ENCODE measurements at regions of chr20 and their contacts with region 1.

Region 1: GRCh38 chr20:37421988-37422387 is 76.0 kb downstream of the SRC start:
- DNase-seq: peak in 8 of 10 donors; percentile 46 to 93 (median 63)

Region 2: DNA sequence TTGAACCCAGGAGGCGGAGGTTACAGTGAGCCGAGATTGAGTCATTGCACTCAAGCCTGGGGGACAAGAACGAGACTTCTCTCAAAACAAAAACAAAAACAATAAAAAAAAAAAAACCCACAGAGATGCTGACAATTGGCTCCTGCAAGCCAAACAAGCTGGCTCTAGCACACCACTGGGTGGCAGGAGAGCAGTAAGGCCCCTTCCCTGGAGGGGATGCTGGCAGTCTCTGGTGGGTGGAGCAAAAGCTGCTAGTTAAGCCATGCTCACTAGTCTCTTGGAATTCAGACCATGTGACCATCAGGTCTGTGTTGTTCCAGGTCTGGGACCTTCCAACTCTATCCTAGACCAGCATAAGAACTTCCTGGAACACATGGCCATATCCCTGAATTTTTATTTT is 629.6 kb before region 1 on chr20:
- intact Hi-C with region 1: no loop called
- DNase-seq: peak in 7 of 10 donors; percentile 28 to 92 (median 53)

Region 3: DNA sequence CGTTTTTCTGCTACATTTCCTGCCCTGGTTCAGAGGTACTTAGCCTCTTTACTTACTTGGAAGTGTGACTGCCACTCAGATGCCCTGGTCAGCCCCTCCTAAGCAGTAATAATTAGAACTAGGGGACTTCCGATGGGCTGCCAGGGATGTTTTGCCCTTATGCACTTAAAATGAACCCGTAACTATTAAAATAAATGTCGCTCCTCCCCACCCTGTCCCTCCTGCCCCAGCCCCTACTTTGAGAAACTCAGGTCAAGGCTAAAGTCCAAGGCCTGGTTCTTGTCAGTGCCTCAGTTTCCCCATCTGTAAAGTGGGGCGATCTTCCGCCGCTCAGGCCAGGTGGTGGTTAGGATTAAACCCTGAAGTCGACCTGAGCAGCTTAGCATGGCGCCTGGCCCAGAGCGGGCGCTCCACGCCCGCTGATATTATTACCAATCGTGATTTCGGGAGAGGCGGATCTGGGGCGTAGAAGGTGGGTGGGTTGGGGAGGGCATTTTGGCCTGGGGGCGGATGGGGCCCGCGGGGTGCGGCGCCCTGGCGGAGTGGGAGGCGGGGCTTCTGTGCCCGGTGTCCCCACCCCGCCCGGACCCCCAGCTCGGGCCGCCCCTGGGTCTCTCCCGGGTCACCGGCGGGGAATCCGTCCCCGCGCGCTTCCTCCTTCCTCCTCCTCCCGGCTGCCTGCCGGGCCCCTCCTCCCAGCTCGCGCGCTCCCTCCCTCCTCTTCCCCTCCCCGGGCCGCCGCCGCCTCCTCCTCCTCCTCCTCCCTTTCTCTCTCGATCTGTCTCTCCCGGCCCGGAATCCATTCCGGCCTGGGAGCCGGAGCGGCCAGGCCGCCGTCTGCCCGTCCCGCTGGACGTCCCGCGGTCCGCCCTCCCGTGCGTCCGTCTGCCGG is 76.4 kb before region 1 on chr20 and contains the start of gene SRC:
- intact Hi-C with region 1: no loop called
- DNase-seq: peak; percentile 29 to 97 (median 74)

Region 4: DNA sequence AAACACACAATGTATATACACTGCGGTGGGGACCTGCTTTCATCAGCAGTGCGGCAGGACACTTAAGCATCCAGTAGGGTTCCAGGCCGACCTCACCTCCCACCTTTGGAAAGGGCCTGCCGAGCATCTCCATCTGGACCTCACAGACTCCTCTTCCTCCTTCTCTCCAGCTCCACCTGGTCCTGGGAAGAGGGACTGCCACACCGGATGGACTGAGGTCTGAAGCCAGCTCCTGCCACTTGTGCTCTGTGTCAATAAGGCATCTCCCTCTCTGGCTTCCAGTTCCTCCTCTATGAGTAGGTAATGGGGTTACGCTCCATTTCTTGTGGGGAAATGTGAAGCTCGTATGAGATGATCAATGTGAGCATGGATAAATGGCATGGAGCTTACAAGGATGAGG is 80.0 kb after region 1 on chr20:
- intact Hi-C with region 1: loop called (anchors 10 kb)
- DNase-seq: peak in 1 of 10 donors; percentile 25

Region 5: DNA sequence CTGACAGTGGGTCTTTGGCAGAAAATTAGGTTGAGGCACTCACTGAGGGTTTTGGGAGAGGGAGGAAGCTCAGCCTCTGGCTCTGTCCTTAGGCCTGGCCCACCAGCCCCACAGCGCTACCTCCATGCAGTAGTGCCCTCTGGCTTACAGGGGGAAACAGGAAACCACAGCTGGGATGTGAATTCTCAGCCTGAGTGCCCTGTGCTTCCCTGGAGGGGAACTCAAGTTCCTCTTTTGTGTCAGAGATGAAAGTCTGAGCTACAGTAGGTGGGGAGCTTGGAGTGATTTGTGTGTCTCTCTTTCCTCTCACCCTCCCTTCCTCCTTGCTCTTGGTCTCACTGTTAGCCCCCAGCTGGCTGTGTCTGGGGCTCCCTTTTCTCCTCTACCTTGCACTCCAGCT is 153.9 kb after region 1 on chr20:
- intact Hi-C with region 1: no loop called
- DNase-seq: no peak

Measured in posterior cingulate gyrus (tissue), 11 donors.